OCI-LY7 (cell line): ENCODE measurements at regions of chr6 and their contacts with region 1.

Region 1: DNA sequence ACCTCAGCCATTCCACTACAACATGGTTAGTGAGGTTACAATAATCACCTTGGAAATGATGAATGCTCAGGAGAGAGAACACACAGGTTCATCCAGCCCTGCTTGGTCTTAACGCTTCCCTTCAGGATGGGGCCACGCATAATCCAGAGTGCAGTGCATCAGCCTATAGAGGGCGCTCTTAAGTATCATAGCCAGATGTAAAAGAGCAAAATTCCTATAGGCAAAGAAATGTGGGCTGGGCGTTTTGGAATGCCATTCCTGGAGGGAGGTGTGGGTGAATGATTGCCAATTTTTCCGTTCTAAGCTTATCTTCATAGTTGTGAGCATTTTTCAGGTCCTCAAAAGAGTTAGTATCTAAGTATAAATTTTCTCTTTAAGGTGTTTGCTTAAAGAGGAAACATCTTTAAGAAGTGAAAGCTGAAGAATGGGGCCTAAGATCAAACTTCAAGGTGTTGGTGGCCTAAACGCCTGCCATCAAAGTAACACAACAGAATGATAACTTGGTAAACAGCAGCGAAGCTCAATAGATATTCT is 1.8 kb downstream of the RIPOR2 start:
- DNase-seq: peak; percentile 80
- H3K4me3 ChIP-seq: peak overlapping the region; percentile 68
- H3K27ac ChIP-seq: peak overlapping the region; percentile 88
- H3K4me1 ChIP-seq: peaks cover 93% of the 10 kb centered on the region
- CTCF ChIP-seq: peak; percentile 100

Region 2: GRCh38 chr6:24861934-24862333 is 72.0 kb before region 1 on chr6:
- CTCF ChIA-PET with region 1: interaction called, 6 read pairs
- POLR2A ChIA-PET with region 1: interaction called, 10 read pairs
- intact Hi-C with region 1: loop called (anchors 1 kb)
- DNase-seq: peak; percentile 88
- H3K4me3 ChIP-seq: peak overlapping the region; percentile 15
- H3K27ac ChIP-seq: peak overlapping the region; percentile 82
- H3K4me1 ChIP-seq: peaks cover 99% of the 10 kb centered on the region
- CTCF ChIP-seq: no peak

Region 3: DNA sequence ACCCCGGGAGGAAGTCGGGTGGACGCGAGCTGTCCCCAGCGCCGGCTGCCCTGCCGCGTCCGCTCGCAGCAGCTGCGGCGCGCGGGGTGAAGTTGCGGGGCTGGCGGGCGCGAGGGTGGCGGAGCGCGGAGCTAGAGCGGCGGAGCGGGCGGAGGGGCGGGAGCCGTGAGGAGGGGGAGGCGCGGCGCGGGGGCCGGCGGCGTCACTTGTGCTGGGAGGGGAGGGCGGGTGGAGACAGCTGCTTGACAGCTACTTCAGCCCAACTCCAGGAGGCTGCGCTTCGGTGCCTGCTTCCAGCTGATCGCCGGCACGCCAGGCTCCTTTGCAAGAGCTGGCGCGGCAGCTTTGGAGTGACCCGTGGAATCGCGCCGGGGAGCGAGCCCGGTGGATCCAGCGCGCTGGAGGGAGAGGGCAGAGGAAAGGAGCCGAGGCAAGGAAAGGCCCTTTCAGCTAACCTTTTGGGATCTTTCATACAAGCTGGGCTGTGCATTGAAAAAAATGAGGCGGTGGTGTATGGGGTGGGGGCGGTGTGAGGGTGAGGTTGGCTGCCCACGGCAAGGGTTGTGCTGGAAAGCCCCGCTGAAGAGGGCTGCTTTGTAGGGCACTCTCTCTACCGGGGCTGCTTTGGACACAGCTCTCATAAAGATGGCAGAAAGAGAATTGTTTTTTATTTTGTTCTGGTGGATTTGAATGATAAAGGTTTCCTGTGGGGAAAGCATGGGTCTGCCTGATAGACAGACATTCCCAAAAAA is 22.8 kb before region 1 on chr6:
- CTCF ChIA-PET with region 1: interaction called, 9 read pairs
- POLR2A ChIA-PET with region 1: interaction called, 90 read pairs
- intact Hi-C with region 1: loop called (anchors 1 kb)
- DNase-seq: peak; percentile 62
- H3K4me3 ChIP-seq: peak overlapping the region; percentile 75
- H3K27ac ChIP-seq: peak overlapping the region; percentile 95
- H3K4me1 ChIP-seq: peaks cover 75% of the 10 kb centered on the region
- CTCF ChIP-seq: no peak

Region 4: GRCh38 chr6:24919004-24919892 is 14.7 kb before region 1 on chr6:
- CTCF ChIA-PET with region 1: interaction called, 10 read pairs
- POLR2A ChIA-PET with region 1: interaction called, 90 read pairs
- intact Hi-C with region 1: loop called (anchors 1 kb)
- DNase-seq: peak; percentile 96
- H3K4me3 ChIP-seq: peak overlapping the region; percentile 61
- H3K27ac ChIP-seq: peak overlapping the region; percentile 88
- H3K4me1 ChIP-seq: peaks cover 66% of the 10 kb centered on the region
- CTCF ChIP-seq: no peak; the same call in 1 of the 2 replicates

Region 5: GRCh38 chr6:24991810-24992467 is 58.0 kb after region 1 on chr6:
- CTCF ChIA-PET with region 1: interaction called, 11 read pairs
- POLR2A ChIA-PET with region 1: interaction called, 5 read pairs
- intact Hi-C with region 1: loop called (anchors 2 kb)
- DNase-seq: peak; percentile 91
- H3K4me3 ChIP-seq: no peak overlapping the region
- H3K27ac ChIP-seq: no peak overlapping the region
- H3K4me1 ChIP-seq: peaks cover 19% of the 10 kb centered on the region
- CTCF ChIP-seq: peak; percentile 96

Region 6: DNA sequence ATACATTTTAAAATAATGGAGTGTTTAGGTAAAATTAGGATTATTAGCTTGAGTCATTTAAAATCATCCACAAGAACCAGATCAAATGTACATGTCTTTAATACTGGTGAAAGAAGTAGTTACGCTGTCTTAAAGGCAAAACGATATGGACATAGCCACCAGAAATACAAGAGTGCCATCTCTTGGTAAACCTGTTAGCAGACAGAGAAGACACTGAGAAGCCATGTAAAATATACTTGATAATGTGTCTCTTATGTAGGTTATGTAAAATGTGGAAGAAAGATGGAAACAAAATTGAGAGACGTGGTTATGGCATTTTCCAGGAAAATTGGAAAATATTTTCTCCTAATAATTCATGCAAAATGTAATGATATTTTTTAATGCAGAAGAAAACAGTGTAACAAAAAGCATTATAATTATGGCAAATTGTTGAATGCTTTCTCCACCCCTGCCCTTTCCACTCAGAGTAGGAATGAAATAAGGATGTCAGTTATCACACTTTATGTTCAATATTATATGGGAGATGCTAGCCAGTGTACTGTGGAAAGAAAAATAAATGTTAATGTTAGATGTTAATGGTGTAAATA is 1008.7 kb after region 1 on chr6:
- CTCF ChIA-PET with region 1: no interaction called
- POLR2A ChIA-PET with region 1: no interaction called
- intact Hi-C with region 1: no loop called
- DNase-seq: peak; percentile 62
- H3K4me3 ChIP-seq: no peak overlapping the region
- H3K27ac ChIP-seq: no peak overlapping the region
- H3K4me1 ChIP-seq: no peaks in the 10 kb centered on the region
- CTCF ChIP-seq: peak; percentile 87